ENCODE measurements at regions of chr12 and their contacts with region 1.

Region 1: DNA sequence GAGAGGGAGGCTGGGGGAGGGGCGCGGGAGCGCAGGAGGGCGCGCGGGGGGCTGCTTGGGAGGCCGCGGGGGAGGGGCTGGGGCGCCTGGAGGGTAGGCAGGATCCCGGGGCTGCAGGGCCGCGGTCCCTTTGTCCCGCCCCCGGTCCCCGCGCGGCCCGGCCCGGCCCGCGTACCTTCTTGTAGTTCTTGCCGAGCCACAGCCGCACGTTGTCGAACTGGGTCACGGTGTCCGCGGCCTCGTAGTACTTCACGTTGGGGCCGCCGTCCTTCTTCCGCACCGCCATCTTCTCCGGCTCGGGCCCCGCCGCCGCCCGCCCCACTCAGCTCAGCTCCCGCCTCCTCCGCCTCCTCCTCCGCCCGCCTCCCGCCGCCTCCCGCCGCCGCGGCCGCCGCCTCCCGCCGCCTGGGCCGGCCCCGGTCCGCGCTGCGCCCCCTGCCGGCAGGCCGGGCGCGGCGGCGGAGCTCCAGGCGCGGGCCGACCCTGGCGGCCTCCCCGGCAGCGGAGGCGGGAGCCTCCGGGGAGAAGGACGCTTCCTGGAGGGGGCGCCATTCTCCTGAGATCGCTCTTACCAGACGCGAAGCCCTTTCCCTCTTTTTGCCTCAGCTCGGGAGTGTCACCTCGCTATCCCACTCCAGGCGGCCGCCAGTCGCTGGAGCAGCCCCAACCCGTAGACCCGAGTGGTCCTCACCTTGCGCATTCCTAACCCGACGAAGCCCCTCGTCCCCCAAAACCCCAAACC is at the start of gene SMARCC2:
- DNase-seq: no peak
- H3K4me3 ChIP-seq: peak within 1 kb of the TSS; percentile 82
- CTCF ChIP-seq: peak; percentile 87

Region 2: DNA sequence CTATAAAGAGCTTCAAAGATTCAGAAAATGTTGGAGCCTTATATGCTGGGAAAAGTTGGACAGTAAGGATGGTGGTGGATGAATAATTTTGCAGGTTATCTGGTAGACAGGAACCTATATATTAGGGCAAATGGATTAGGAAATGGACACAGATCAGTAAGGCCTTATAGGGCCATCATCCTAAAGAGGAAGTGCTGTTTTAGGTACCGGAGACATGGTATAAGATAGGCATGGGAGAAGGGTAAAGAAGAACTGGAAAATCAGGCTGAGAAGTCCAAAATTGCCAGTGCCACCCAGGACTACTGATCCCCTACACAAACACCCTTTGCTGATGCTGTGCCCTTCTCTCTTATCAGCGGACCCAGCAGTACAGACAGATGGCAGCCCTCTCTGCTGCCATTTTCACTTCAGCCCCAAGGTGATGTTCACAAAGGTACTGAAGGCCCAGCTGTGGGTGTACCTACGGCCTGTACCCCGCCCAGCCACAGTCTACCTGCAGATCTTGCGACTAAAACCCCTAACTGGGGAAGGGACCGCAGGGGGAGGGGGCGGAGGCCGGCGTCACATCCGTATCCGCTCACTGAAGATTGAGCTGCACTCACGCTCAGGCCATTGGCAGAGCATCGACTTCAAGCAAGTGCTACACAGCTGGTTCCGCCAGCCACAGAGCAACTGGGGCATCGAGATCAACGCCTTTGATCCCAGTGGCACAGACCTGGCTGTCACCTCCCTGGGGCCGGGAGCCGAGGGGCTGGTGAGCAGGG is 440.9 kb before region 1 on chr12:
- CTCF ChIA-PET with region 1: no interaction called
- POLR2A ChIA-PET with region 1: no interaction called
- DNase-seq: no peak
- H3K4me3 ChIP-seq: no peak overlapping the region
- CTCF ChIP-seq: no peak

Region 3: GRCh38 chr12:56041552-56042429 is 147.6 kb before region 1 on chr12 and contains the start of gene RPS26:
- CTCF ChIA-PET with region 1: interaction called, 25 read pairs
- POLR2A ChIA-PET with region 1: no interaction called
- DNase-seq: peak; percentile 96
- H3K4me3 ChIP-seq: peak within 1 kb of the TSS; percentile 95
- CTCF ChIP-seq: peak; percentile 64

Region 4: DNA sequence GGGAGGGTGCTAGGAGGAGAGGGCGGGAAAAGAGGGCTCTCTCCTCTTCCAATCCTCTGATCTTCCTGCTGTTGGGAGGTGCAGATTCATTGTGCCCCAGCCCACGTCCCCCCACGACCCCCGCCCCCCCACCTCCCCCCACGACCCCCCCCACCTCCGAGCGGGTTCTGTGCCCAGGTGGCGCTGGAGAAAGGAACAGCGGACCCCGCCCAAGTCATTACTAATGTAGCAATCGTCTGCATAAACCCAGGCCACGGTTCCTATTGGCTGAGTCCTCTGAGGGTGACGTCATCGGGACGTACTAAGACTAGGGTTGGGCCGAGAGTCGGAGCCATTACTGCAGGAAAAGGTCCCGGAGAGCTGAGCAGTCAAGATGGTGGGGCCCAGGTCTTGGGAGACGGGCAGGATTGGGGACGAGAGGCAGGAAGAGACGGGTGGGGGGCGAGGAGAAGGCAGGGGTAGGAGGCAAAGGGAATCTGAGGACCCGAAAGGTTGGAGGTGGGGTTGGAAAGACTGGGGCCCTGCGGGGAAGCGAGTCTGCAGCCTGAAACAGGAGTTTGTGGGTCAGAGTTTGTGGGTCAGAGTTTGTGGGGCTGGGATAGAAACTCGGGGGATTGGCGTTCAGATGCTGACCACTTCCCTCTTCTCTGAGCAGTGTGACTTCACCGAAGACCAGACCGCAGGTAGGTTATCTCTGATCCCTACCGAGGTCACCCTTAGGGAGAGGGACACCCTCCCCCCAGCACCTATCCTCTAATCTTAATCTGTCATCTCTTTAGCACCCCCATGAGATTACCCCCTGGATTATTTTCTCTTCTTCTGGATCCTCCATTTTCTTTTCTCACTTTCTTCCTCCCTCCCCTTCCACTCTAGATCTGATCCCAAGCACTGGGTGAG is 31.1 kb before region 1 on chr12 and contains the start of gene MYL6:
- CTCF ChIA-PET with region 1: interaction called, 21 read pairs
- POLR2A ChIA-PET with region 1: interaction called, 15 read pairs
- DNase-seq: peak; percentile 86
- H3K4me3 ChIP-seq: peak within 1 kb of the TSS; percentile 99
- CTCF ChIP-seq: no peak

Region 5: GRCh38 chr12:56178347-56178746 is 11.0 kb before region 1 on chr12:
- CTCF ChIA-PET with region 1: interaction called, 83 read pairs
- POLR2A ChIA-PET with region 1: no interaction called
- DNase-seq: no peak
- H3K4me3 ChIP-seq: no peak overlapping the region
- CTCF ChIP-seq: no peak

Region 6: GRCh38 chr12:56224102-56224701 is 34.9 kb after region 1 on chr12 and contains the start of gene NABP2:
- CTCF ChIA-PET with region 1: interaction called, 145 read pairs
- POLR2A ChIA-PET with region 1: interaction called, 32 read pairs
- DNase-seq: peak; percentile 75
- H3K4me3 ChIP-seq: peak within 1 kb of the TSS; percentile 78
- CTCF ChIP-seq: peak; percentile 96

Region 7: GRCh38 chr12:56266693-56267442 is 77.5 kb after region 1 on chr12 and contains the start of gene COQ10A:
- CTCF ChIA-PET with region 1: interaction called, 15 read pairs
- POLR2A ChIA-PET with region 1: interaction called, 7 read pairs
- DNase-seq: no peak
- H3K4me3 ChIP-seq: peak within 1 kb of the TSS; percentile 87
- CTCF ChIP-seq: peak; percentile 78

Region 8: GRCh38 chr12:56408799-56409417 is 219.6 kb after region 1 on chr12:
- CTCF ChIA-PET with region 1: no interaction called
- POLR2A ChIA-PET with region 1: no interaction called
- DNase-seq: no peak
- H3K4me3 ChIP-seq: no peak overlapping the region
- CTCF ChIP-seq: no peak

Measured in AG04449 (cell line).